Posterior vena cava (tissue), 2 donors: ENCODE measurements at regions of chr10 and their contacts with region 1.

Region 1: DNA sequence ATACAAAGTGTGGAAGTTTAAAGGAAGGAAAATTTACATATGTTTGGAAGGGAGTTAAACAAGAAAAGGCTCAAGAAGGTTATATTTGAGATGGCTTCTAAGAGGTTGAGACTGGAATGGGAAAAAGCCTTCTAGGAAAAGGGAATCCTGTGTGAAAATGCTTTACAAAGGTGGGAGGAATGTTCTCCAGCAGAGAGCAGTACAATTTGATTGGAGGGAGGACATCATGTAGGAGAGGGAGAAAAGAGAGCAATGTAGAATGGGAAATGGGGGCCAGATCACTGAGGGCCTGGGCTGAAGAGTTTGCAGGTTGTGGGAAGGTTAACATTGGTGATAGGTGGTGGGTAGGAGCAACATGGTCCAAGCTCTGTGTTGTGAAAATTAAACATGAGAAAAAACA is 366.9 kb downstream of the XPNPEP1 start:
- DNase-seq: no peak

Region 2: GRCh38 chr10:107790271-107790670 is 1766.1 kb before region 1 on chr10:
- intact Hi-C with region 1: loop called in 1 of 2 experiments (anchors 5 kb)
- DNase-seq: no peak

Region 3: DNA sequence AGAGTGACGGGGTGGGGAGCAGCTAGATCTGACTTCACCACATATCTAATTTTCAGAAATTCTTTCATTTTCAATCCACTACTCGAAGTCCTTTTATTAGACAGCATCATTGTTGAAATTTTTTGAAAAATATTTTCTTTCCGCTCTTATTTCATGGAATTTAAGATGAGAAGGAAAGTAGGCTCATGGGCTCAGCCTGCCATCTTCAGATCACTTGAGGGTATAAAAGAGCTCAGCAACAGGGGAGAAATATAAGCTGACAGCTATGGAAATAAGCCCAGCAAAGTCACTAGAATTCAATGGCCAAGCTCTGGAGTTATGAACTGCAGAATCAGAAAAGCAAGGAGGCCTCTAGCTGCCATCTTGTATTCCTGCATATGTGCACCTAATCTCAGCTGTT is 22.2 kb before region 1 on chr10:
- intact Hi-C with region 1: loop called in 1 of 2 experiments (anchors 2 kb)
- DNase-seq: no peak

Region 4: DNA sequence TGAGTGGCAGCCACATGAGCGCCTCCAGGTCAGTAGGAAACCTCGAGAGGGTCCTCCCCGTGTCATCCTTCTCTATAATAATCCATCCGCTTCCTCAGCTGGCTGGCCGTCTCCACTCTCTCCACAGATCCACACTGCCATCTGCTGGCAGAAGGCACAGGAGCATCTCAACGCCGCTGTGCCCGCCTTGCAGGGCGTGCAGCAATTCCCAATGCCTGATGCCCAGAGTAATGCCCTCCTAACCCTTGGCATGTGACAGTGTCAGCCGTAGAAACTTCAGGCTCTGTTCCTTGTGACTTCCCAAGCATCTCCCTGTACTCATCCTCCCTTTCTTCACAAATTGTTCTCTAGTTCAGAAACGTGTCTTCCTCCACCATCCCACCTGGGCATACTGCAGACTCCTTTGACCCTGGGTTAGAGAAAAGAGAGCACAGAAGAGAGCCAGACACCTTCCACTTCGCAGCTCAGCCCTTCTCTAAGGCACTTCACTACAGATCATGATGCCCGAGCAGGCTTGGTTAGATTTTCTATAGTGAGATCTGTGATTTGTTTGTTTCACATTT is 296.2 kb after region 1 on chr10:
- intact Hi-C with region 1: no loop called
- DNase-seq: peak; percentile 92